Ascending aorta (tissue), 2 donors: ENCODE measurements at regions of chr11 and their contacts with region 1.

Region 1: GRCh38 chr11:34357701-34358257 is at the start of gene ABTB2:
- DNase-seq: peak; percentile 94 to 99
- H3K4me3 ChIP-seq: peak within 1 kb of the TSS; percentile 81 to 84
- H3K27ac ChIP-seq: peak within 1 kb of the TSS; percentile 84 to 87
- H3K4me1 ChIP-seq: peaks cover 3 to 23% of the 10 kb centered on the region in 2 donors
- H3K27me3 ChIP-seq: no peaks in the 10 kb centered on the region
- CTCF ChIP-seq: no peak
- total RNA-seq, gene ABTB2: 7.9 TPM

Region 2: GRCh38 chr11:33687733-33688479 is 669.9 kb before region 1 on chr11:
- intact Hi-C with region 1: loop called (anchors 5 kb)
- DNase-seq: no peak
- H3K4me3 ChIP-seq: no peak overlapping the region
- H3K27ac ChIP-seq: no peak overlapping the region
- H3K4me1 ChIP-seq: peaks cover 6 to 17% of the 10 kb centered on the region in 2 donors
- H3K27me3 ChIP-seq: no peaks in the 10 kb centered on the region
- CTCF ChIP-seq: peak; percentile 36 to 62 (median 50)

Region 3: GRCh38 chr11:34051349-34052035 is 306.3 kb before region 1 on chr11 and contains the start of gene CAPRIN1:
- intact Hi-C with region 1: loop called (anchors 2 kb)
- DNase-seq: peak; percentile 23 to 91
- H3K4me3 ChIP-seq: peak within 1 kb of the TSS; percentile 92 to 99
- H3K27ac ChIP-seq: peak within 1 kb of the TSS; percentile 98 to 100
- H3K4me1 ChIP-seq: peaks cover 6 to 26% of the 10 kb centered on the region in 2 donors
- H3K27me3 ChIP-seq: no peaks in the 10 kb centered on the region
- CTCF ChIP-seq: peak in 1 of 3 experiments; percentile 8
- total RNA-seq, gene CAPRIN1: 155 TPM

Region 4: GRCh38 chr11:34174412-34175041 is 183.3 kb before region 1 on chr11:
- intact Hi-C with region 1: loop called (anchors 1 kb)
- DNase-seq: peak in 1 of 2 donors; percentile 89
- H3K4me3 ChIP-seq: peak overlapping the region; percentile 47 to 58
- H3K27ac ChIP-seq: peak overlapping the region; percentile 13 to 31
- H3K4me1 ChIP-seq: peaks cover 5 to 7% of the 10 kb centered on the region in 2 donors
- H3K27me3 ChIP-seq: no peaks in the 10 kb centered on the region
- CTCF ChIP-seq: peak; percentile 95 to 99 (median 99)

Region 5: GRCh38 chr11:34250732-34251639 is 106.8 kb before region 1 on chr11:
- intact Hi-C with region 1: loop called (anchors 1 kb)
- DNase-seq: peak; percentile 37 to 87
- H3K4me3 ChIP-seq: peak overlapping the region; percentile 11 to 50
- H3K27ac ChIP-seq: peak overlapping the region; percentile 78 to 86
- H3K4me1 ChIP-seq: peaks cover 3 to 11% of the 10 kb centered on the region in 2 donors
- H3K27me3 ChIP-seq: no peaks in the 10 kb centered on the region
- CTCF ChIP-seq: no peak

Region 6: GRCh38 chr11:34308913-34309585 is 48.7 kb before region 1 on chr11:
- intact Hi-C with region 1: loop called (anchors 2 kb)
- DNase-seq: no peak
- H3K4me3 ChIP-seq: no peak overlapping the region
- H3K27ac ChIP-seq: peak overlapping the region in 1 of 2 donors; percentile 41
- H3K4me1 ChIP-seq: peaks cover 3 to 10% of the 10 kb centered on the region in 2 donors
- H3K27me3 ChIP-seq: no peaks in the 10 kb centered on the region
- CTCF ChIP-seq: no peak

Region 7: DNA sequence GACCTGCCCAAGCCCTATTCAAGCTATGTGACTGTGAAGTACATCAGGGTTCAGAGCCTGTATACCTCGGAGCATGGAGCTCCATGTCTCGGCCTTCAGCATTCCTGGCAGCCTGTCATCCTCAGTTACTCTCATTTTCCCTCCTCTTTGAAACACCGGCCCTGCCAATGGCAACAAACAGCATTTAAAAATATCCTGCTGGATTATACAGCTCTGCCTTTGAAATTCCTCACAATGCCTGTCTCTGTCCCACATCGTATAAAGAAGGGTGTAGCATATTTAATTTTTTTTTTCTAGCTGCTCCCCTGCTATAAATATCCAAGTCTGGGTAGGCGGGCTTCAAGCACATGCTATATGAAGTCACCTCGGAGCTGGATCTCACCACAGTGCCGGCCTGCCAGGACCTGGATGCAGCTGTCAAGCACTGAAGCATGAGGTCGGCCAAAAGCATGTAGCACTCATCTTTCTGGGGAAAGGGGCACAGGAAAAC is 11.7 kb before region 1 on chr11:
- intact Hi-C with region 1: loop called (anchors 1 kb)
- DNase-seq: peak; percentile 47 to 85
- H3K4me3 ChIP-seq: peak overlapping the region in 1 of 2 donors; percentile 27
- H3K27ac ChIP-seq: peak overlapping the region; percentile 78 to 94
- H3K4me1 ChIP-seq: peaks cover 15 to 76% of the 10 kb centered on the region in 2 donors
- H3K27me3 ChIP-seq: no peaks in the 10 kb centered on the region
- CTCF ChIP-seq: no peak

Region 8: GRCh38 chr11:34468209-34468841 is 110.5 kb after region 1 on chr11:
- intact Hi-C with region 1: no loop called
- DNase-seq: no peak
- H3K4me3 ChIP-seq: no peak overlapping the region
- H3K27ac ChIP-seq: no peak overlapping the region
- H3K4me1 ChIP-seq: no peaks in the 10 kb centered on the region
- H3K27me3 ChIP-seq: no peaks in the 10 kb centered on the region
- CTCF ChIP-seq: peak in 1 of 3 experiments; percentile 24